Kidney (tissue), 22 donors: ENCODE measurements at regions of chr1 and their contacts with region 1.

Region 1: DNA sequence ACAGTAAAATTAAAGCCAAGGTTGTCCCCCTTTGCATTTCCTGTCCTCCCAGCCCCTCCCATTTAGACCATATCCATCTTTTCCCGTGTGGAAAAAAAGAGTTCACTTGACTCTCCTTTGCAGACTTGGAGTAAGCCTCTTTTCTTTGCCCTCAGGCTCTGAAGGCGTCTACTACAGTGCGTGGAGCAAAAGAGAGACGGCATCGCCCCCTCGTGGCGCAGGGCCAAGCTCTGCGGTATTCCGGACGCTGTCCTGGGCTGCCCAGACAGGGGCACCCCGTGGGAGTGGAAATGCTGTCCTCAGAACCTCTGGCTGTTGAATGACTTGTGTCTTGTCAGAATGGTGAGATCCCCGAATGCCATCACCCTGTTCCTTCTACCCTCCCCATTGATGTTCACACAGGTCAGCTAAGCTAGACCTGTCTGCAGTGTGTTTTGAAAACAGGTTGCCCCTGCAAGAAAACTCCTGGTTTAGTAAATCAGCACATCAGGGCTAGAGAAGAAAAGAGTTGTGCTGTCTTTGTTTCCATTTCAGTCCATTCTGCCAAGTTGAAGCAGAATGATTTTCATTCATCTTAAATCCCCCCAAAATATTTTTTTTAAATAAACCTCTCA is 12.3 kb upstream of the GJA8 start:
- DNase-seq: peak; percentile 86 to 91 (median 87)
- H3K4me3 ChIP-seq: no peak overlapping the region
- H3K27ac ChIP-seq: no peak overlapping the region
- H3K4me1 ChIP-seq: peaks cover 2 to 4% (median 2%) of the 10 kb centered on the region in 3 donors
- H3K27me3 ChIP-seq: no peaks in the 10 kb centered on the region
- CTCF ChIP-seq: peak; percentile 71

Region 2: DNA sequence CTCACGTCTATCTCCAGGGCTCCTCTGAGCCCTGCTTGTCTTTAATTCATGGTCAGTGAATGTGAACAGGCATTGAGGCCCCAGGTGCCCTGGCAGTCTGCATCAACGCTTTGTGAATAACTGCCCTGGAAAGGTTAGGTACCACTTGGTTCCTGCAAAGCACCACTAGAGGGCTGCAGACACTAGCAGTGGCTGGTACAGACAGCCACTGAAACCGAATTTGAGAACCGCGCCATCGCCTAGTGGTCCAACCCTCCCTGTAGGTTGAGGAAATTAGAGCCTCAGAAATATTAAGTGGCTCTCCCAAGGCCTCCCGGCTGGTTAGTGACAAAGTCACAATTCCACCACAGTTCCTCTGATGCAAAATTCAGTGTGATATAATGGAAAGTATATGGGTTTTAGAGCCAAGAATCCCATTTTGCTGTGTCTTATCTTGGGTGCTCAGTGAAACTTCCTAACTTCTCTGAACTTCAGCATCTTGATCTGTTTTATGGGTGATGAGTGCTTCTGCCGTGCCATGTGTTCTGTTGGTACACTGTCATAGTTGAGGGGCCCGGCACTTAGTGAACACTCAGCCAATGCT is 395.2 kb before region 1 on chr1:
- intact Hi-C with region 1: loop called (anchors 5 kb)
- DNase-seq: peak; percentile 73 to 91 (median 82)
- H3K4me3 ChIP-seq: no peak overlapping the region
- H3K27ac ChIP-seq: no peak overlapping the region
- H3K4me1 ChIP-seq: no peaks in the 10 kb centered on the region
- H3K27me3 ChIP-seq: no peaks in the 10 kb centered on the region
- CTCF ChIP-seq: peak; percentile 97

Region 3: DNA sequence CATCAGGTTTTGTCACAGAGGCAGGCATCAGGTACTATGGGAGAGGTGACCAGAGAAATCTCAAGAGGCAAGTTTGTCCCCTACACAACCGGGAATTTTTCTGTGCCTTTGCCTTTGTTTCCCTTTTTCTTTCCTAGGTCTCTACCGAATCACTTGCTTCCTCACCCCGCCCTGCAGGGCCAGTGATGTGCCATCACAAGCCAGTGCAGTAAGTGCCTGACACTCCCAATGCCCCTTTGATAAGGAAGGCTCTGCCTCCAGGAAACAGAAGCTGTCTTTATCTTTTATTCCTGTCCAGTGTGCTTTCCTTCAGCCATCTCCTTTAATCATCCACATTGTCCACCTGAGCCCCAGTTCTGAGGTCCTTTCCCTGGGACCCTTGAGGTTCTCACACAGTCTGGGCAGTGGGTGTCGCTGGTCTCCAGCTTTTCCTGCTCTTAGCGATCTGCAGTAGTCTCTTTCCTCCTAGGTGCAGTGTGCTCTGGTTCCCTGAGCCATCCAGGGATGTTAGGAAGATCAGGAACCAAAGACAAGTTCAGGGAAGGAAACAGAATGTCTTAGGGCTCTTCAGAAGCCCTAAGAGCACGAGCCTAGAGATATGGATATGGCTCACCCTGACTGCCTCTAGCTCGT is 166.5 kb before region 1 on chr1:
- intact Hi-C with region 1: loop called (anchors 5 kb)
- DNase-seq: peak in 4 of 5 donors; percentile 43 to 73 (median 65)
- H3K4me3 ChIP-seq: no peak overlapping the region
- H3K27ac ChIP-seq: no peak overlapping the region
- H3K4me1 ChIP-seq: peaks cover 0 to 9% (median 2%) of the 10 kb centered on the region in 3 donors
- H3K27me3 ChIP-seq: no peaks in the 10 kb centered on the region
- CTCF ChIP-seq: peak; percentile 61